Colonic mucosa (tissue), 4 donors: ENCODE measurements at regions of chr13 and their contacts with region 1.

Region 1: DNA sequence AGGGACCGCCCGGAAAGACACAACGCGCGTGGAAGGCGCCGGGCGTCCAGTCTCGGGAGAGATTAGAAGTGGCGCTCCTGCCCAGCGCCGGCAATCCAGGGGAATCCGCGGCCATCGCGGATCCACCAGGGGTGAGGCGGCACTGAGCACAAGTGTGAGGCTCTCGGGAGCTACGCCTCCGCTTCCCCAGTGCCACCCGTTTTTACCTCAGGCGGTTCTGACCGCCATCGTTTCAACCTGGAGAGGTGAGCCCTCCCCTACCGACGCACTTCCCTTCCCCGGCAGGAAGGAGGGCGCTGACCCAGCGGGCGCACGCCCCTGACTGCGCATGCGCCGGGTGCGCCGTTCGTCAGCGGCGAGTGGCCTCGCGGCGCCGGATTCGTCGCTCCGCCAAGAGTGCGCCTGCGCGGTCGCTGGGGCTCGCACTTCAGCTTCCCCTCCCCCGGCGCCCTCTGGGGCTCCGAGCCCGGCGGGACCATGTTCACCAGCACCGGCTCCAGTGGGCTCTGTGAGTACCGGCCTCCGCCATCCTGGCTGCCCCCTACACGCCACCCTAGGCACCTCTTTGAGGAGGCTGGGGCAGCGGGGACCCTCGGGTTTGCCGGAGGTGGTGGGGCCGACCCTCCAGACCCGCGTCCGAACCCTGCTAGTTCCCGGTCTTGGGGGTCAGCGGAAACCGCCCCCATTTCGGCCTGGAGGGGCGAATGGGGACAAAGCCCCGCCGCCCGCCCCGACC is at the start of gene UBAC2:
- DNase-seq: peak; percentile 94
- H3K4me3 ChIP-seq: peak within 1 kb of the TSS; percentile 85
- H3K27ac ChIP-seq: peak within 1 kb of the TSS; percentile 97
- H3K4me1 ChIP-seq: peaks cover 15% of the 10 kb centered on the region
- H3K27me3 ChIP-seq: no peaks in the 10 kb centered on the region
- CTCF ChIP-seq: no peak
- total RNA-seq, gene UBAC2: 67.6 to 88.4 TPM

Region 2: DNA sequence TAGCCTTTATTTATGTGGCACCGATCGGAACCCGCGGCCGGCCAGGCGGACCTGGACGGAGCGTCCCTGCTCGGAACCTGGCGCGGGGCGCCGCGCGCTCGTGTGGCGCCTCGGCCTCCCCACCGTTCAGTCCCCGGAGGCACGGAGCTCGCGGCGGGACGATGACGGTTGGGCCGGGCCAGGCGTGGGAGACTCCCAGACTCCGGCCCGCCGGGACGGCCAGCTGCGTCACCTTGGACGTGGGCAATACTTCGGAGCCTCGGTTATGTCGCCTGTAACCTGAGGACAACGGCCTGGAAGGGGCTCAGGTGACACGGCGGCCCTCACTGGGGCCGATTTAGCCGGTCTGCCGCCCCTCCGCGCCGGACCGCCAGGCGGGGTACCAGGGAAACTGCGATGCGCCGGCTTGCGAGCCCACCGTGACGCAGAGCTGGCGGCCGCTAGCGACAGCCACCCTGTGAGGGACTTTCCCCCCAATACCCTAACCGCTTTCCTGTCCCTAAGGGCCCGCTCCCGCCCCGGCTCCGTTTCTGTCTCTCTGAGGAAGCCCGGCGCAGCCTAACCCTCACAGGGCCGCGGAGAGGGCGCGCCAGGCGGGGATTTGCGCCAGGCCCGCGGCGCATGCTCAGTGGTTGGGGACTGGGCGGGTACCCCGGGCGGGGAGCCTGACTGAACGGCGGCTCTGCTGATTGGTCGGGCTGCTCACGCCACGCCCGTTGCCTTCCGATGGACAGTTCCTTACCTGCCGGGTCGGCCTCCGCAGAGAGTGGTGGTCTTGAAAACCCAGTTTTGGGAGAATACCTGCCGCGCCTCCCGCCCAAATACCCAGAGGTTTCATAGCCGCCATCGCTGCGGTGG is 113.3 kb before region 1 on chr13:
- intact Hi-C with region 1: loop called (anchors 10 kb)
- DNase-seq: peak; percentile 96
- H3K4me3 ChIP-seq: peak overlapping the region; percentile 94
- H3K27ac ChIP-seq: peak overlapping the region; percentile 94
- H3K4me1 ChIP-seq: no peaks in the 10 kb centered on the region
- H3K27me3 ChIP-seq: no peaks in the 10 kb centered on the region
- CTCF ChIP-seq: peak; percentile 23